ENCODE measurements at regions of chr9 and their contacts with region 1.

Region 1: GRCh38 chr9:120619751-120620655 is 40.0 kb upstream of the CDK5RAP2 start:
- DNase-seq: peak in 5 of 10 donors; percentile 51 to 78 (median 64)
- H3K4me3 ChIP-seq: peak overlapping the region in 6 of 59 donors; percentile 0 to 36 (median 18)
- H3K27ac ChIP-seq: peak overlapping the region in 57 of 59 donors; percentile 4 to 97 (median 74)
- H3K27me3 ChIP-seq: no peaks in the 10 kb centered on the region
- CTCF ChIP-seq: peak; percentile 87 to 99 (median 94)

Region 2: GRCh38 chr9:120579750-120580590 is 40.0 kb before region 1 on chr9 and contains the start of gene CDK5RAP2:
- intact Hi-C with region 1: loop called in 1 of 2 experiments (anchors 5 kb)
- DNase-seq: peak; percentile 85 to 96 (median 95)
- H3K4me3 ChIP-seq: peak within 1 kb of the TSS; percentile 68 to 100 (median 95)
- H3K27ac ChIP-seq: peak within 1 kb of the TSS; percentile 20 to 97 (median 85)
- H3K27me3 ChIP-seq: no peaks in the 10 kb centered on the region
- CTCF ChIP-seq: peak in 36 of 56 donors; percentile 10 to 56 (median 30)
- total RNA-seq, gene CDK5RAP2: 45.9 to 132 (median 71.9) TPM

Region 3: GRCh38 chr9:120730661-120731514 is 110.9 kb after region 1 on chr9:
- intact Hi-C with region 1: no loop called
- DNase-seq: no peak
- H3K4me3 ChIP-seq: no peak overlapping the region
- H3K27ac ChIP-seq: peak overlapping the region in 55 of 59 donors; percentile 1 to 83 (median 65)
- H3K27me3 ChIP-seq: no peaks in the 10 kb centered on the region
- CTCF ChIP-seq: no peak

Region 4: DNA sequence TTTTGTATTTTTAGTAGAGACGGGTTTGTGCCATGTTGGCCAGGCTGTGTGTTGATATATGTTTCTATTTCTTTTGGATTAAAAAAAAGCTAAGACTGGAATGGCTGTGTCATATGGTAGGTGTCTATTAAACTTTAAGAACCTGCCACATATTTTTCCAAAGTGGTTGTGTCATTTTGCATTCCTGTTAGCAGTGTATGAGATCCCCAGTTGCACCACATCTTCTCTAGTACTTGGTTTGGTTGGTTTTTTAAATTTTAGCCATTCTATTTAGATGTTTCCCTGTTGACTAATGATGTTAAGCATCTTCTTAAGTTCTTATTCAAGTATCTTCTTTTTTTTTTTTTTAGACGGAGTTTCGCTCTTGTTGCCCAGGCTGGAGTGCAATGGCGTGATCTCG is 130.4 kb after region 1 on chr9:
- intact Hi-C with region 1: loop called in 1 of 2 experiments (anchors 5 kb)
- DNase-seq: no peak
- H3K4me3 ChIP-seq: no peak overlapping the region
- H3K27ac ChIP-seq: no peak overlapping the region
- H3K27me3 ChIP-seq: no peaks in the 10 kb centered on the region
- CTCF ChIP-seq: no peak

Region 5: DNA sequence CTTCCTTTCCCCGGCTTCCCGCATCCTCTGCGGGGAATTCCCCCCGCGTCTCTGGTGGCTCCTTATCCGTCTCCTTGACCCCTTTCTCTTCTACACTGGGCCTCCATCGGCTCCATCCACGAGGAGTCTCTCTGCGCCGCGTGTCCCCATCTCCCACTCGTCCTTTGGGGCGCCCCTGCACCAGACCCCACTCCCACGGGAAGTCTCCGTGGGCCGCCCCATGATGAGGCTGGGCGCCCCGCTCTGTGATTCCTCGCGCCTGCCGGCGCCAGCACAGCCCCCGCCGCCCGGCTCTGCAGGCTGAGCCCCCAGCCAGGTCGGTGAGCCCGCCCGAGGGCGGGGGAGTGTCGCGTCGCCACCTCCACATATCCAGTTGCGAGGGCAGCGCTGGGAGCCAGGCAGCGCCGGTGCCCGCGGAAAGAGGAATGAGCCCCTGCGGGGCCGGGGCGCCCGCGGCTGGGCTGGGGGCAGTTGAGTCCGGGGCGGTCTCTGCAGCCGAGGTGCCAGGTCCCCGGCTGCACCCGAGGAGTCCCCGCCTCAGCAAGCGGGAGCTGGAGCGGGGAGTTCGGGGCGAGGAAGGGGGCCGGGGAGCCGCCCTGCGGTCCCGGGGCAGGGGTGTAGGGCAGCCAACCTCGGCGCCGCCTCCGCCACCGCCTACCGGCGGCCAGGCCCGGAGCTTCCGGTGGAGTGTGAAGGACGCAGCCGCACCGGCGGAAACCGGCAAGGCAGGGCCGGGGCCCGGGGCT is 308.7 kb after region 1 on chr9:
- intact Hi-C with region 1: loop called in 1 of 2 experiments (anchors 10 kb)
- DNase-seq: peak in 9 of 10 donors; percentile 45 to 82 (median 69)
- H3K4me3 ChIP-seq: peak overlapping the region; percentile 56 to 94 (median 82)
- H3K27ac ChIP-seq: peak overlapping the region; percentile 61 to 96 (median 89)
- H3K27me3 ChIP-seq: no peaks in the 10 kb centered on the region
- CTCF ChIP-seq: peak in 34 of 56 donors; percentile 8 to 54 (median 37)

Region 6: DNA sequence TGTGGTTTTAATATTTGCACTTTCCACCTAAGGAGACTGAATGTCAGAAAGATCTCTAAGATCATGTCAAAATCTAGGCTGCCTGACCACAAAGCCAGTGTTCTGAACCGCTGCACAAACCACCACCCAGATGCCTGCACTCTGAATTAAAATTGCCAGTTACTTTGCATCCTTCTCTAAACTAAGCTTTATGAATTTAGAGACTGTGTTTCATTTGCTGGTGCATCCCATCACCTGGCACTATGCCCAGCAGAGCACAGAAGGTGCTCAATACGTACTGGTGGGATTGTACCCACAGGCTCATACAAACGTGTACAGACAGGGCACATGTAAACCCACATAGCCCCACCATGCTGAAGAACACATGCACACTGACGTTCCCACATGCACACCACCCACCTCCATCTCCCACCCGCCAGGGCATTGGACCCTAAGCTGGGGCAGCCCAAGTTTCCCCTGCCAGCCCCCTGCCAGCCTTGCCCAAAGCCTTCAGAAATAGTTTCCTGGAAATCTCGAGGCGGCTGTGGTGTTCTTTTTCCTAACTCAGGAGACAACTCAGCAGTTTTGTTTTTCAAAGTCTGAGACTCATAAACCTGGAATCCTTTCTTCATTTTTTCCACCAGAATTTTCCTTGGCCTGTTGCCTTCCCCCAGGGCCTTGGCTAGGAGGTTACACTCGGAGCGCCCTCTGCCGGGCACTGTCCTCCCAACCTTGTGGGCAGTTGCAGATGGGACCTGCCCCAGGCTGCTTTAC is 316.2 kb after region 1 on chr9:
- intact Hi-C with region 1: loop called in 1 of 2 experiments (anchors 5 kb)
- DNase-seq: peak; percentile 87 to 93 (median 90)
- H3K4me3 ChIP-seq: peak overlapping the region in 10 of 59 donors; percentile 0 to 25 (median 14)
- H3K27ac ChIP-seq: peak overlapping the region; percentile 57 to 95 (median 88)
- H3K27me3 ChIP-seq: no peaks in the 10 kb centered on the region
- CTCF ChIP-seq: peak; percentile 72 to 97 (median 92)